OCI-LY7 (cell line): ENCODE measurements at regions of chr3 and their contacts with region 1.

Region 1: GRCh38 chr3:192444096-192444790 is 283.1 kb downstream of the FGF12 start:
- DNase-seq: peak; percentile 69
- H3K4me3 ChIP-seq: no peak overlapping the region
- H3K27ac ChIP-seq: no peak overlapping the region
- H3K4me1 ChIP-seq: peaks cover 8% of the 10 kb centered on the region
- CTCF ChIP-seq: peak; percentile 100

Region 2: DNA sequence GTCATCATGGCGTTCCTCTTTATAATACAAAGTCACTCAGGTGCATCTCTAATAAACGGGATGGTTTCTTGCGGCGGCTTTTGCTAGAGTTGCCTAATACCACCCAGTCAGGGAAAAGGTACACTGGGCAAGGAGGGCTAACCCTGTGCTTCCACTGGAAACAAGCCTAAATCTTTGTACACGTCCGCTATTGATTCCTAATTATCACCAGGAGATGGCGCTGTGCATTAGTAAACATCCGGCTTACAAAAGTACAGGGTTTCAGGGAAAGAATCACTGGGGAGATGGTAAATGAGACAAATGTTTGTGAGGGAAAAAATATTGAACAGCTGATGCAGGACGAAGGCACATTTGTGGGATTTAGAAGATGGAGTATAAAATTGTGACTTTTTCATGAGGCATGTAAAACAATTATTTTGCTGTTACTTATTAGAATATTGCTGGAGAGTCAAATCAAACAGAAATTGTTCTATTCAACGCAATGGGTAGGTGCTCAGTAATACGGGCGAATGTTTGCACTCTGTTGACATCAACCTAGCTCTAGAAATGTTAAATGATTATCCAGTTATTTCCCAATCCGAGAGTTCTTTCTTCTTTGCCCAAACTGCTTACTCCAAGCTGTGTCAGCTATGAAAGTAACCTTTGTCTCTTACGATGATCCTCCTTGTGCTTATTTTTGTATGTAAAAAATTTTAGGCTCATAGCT is 1632.3 kb before region 1 on chr3:
- CTCF ChIA-PET with region 1: no interaction called
- POLR2A ChIA-PET with region 1: no interaction called
- intact Hi-C with region 1: loop called (anchors 10 kb)
- DNase-seq: peak; percentile 69
- H3K4me3 ChIP-seq: peak overlapping the region; percentile 10
- H3K27ac ChIP-seq: no peak overlapping the region
- H3K4me1 ChIP-seq: no peaks in the 10 kb centered on the region
- CTCF ChIP-seq: peak; percentile 93

Region 3: GRCh38 chr3:191244242-191244867 is 1199.9 kb before region 1 on chr3:
- CTCF ChIA-PET with region 1: no interaction called
- POLR2A ChIA-PET with region 1: no interaction called
- intact Hi-C with region 1: loop called (anchors 10 kb)
- DNase-seq: peak; percentile 57
- H3K4me3 ChIP-seq: no peak overlapping the region
- H3K27ac ChIP-seq: no peak overlapping the region
- H3K4me1 ChIP-seq: peaks cover 29% of the 10 kb centered on the region
- CTCF ChIP-seq: peak; percentile 87

Region 4: GRCh38 chr3:191499307-191500080 is 944.7 kb before region 1 on chr3:
- CTCF ChIA-PET with region 1: no interaction called
- POLR2A ChIA-PET with region 1: no interaction called
- intact Hi-C with region 1: loop called (anchors 5 kb)
- DNase-seq: no peak
- H3K4me3 ChIP-seq: no peak overlapping the region
- H3K27ac ChIP-seq: no peak overlapping the region
- H3K4me1 ChIP-seq: no peaks in the 10 kb centered on the region
- CTCF ChIP-seq: no peak

Region 5: GRCh38 chr3:192188218-192188835 is 255.9 kb before region 1 on chr3:
- CTCF ChIA-PET with region 1: no interaction called
- POLR2A ChIA-PET with region 1: interaction called, 4 read pairs
- intact Hi-C with region 1: loop called (anchors 5 kb)
- DNase-seq: peak; percentile 79
- H3K4me3 ChIP-seq: no peak overlapping the region
- H3K27ac ChIP-seq: no peak overlapping the region
- H3K4me1 ChIP-seq: peaks cover 45% of the 10 kb centered on the region
- CTCF ChIP-seq: peak; percentile 94

Region 6: DNA sequence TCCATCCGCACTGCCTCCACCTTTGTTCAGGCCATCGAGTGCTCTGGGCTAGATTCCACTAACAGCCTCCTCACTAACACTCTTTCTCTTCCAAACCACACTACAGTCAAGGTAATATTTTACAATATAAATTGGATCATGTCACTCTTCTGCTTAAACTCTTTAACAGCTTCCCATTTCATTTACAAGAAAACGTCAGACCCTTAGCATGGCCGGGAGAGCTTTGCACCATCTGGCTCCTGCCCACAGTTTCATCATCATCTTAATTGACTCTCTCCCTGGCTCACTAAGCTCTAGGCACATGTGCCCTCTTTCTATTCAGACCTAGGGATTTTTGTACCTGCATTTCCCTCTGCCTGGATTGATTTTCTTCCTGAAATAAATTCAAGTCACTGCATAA is 71.6 kb before region 1 on chr3:
- CTCF ChIA-PET with region 1: no interaction called
- POLR2A ChIA-PET with region 1: no interaction called
- intact Hi-C with region 1: no loop called
- DNase-seq: no peak
- H3K4me3 ChIP-seq: no peak overlapping the region
- H3K27ac ChIP-seq: no peak overlapping the region
- H3K4me1 ChIP-seq: no peaks in the 10 kb centered on the region
- CTCF ChIP-seq: no peak

Region 7: DNA sequence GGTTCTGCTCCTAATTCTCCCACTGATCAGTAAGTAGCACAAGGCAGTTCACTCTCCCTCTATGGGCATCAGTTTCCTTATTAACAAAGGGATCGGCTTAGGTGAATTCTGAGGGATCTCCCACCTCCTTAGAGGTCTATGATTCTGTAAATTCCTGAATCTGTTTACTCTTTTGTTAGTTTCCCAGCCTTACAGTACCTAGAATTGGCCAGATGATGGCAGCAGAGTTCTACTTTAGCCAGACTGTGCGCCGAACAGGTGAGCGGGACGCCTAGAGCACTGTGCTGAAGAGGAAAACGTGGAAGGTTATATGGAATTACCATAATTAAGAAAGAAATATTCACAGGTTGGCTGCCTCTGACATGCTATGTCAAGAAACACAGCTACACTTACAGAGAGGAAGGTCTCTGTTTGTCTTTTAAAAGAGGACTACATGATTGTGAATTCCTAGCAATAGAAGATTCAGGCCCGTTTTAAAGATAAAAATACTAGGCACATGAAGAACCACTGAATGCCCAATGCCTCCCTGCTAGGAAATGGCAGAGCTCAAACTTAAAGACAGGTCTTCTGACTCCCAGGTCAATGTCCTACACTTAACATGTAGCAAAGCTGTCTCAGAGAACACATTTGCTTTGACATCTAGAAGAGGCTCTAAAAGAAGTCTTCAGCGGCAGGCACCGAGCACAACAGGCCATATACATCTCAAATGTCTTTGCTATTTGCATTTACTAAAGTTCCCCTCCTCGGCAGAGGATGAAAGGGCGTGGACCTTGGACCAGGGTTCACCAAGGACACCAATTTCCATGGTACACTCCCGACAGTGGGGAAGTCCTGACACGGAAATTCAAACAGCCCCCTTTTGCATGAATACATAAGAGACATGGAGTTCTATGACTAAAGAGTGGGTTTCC is 23.2 kb after region 1 on chr3:
- CTCF ChIA-PET with region 1: no interaction called
- POLR2A ChIA-PET with region 1: no interaction called
- intact Hi-C with region 1: no loop called
- DNase-seq: peak; percentile 69
- H3K4me3 ChIP-seq: no peak overlapping the region
- H3K27ac ChIP-seq: no peak overlapping the region
- H3K4me1 ChIP-seq: no peaks in the 10 kb centered on the region
- CTCF ChIP-seq: peak; percentile 98